Naive thymus-derived CD4-positive, alpha-beta T cell (primary cell): ENCODE measurements at regions of chr5 and their contacts with region 1.

Region 1: DNA sequence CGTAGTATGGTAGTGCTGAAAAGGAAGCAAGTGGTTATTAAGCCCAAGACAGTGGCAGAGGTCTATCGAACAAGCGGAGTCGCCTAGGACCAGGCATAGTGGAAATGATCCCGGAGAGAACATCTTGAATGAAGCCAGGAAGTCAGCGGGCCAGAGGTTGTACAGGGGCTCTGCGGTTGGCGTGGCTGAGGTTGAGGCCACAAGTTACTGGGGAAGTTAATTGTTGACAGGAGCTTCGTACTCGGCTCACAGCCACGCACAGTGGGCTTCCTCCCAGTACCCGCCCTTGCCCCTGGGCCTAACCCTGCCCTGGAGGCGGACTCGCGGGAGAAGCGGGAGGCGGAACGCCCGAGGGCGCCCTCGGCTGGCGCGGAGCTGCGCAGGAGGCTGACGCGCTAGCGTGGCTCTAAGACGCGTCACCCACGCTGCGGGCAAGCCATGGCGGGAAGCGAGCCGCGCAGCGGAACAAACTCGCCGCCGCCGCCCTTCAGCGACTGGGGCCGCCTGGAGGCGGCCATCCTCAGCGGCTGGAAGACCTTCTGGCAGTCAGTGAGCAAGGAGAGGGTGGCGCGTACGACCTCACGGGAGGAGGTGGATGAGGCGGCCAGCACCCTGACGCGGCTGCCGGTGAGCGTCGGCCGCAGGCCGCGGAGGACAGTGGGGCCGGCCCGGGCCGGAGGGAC is at the start of gene FBXO4:
- DNase-seq: peak; percentile 79 to 92 (median 88)
- ATAC-seq: peak; percentile 97
- H3K4me3 ChIP-seq: peak within 1 kb of the TSS; percentile 85
- H3K4me3 Mint-ChIP-seq: peak within 1 kb of the TSS; percentile 83 to 93 (median 88)
- H3K27ac ChIP-seq: peak within 1 kb of the TSS; percentile 96
- H3K27ac Mint-ChIP-seq: peak within 1 kb of the TSS; percentile 93 to 100 (median 97)
- H3K4me1 ChIP-seq: peaks cover 6 to 14% of the 10 kb centered on the region in 2 donors
- H3K4me1 Mint-ChIP-seq: peaks cover 9 to 43% (median 25%) of the 10 kb centered on the region in 7 donors
- H3K27me3 ChIP-seq: no peaks in the 10 kb centered on the region
- H3K27me3 Mint-ChIP-seq: no peaks in the 10 kb centered on the region
- total RNA-seq, gene FBXO4: 10.9 to 15.0 (median 14.6) TPM

Region 2: GRCh38 chr5:40798012-40798855 is 1126.8 kb before region 1 on chr5 and contains the start of gene PRKAA1:
- CTCF ChIA-PET with region 1: no interaction called
- POLR2A ChIA-PET with region 1: interaction called, 3 read pairs
- intact Hi-C with region 1: loop called in 1 of 2 experiments (anchors 1 kb)
- DNase-seq: peak; percentile 86 to 92 (median 91)
- ATAC-seq: peak; percentile 98
- H3K4me3 ChIP-seq: peak within 1 kb of the TSS; percentile 98
- H3K4me3 Mint-ChIP-seq: peak within 1 kb of the TSS; percentile 86 to 96 (median 94)
- H3K27ac ChIP-seq: peak within 1 kb of the TSS; percentile 91
- H3K27ac Mint-ChIP-seq: peak within 1 kb of the TSS; percentile 74 to 96 (median 94)
- H3K4me1 ChIP-seq: peaks cover 12 to 16% of the 10 kb centered on the region in 2 donors
- H3K4me1 Mint-ChIP-seq: peaks cover 28 to 55% (median 44%) of the 10 kb centered on the region in 7 donors
- H3K27me3 ChIP-seq: no peaks in the 10 kb centered on the region
- H3K27me3 Mint-ChIP-seq: peaks cover 0 to 17% (median 0%) of the 10 kb centered on the region in 5 donors
- total RNA-seq, gene PRKAA1: 65.5 to 103 (median 98.1) TPM

Region 3: GRCh38 chr5:41869739-41870626 is 55.0 kb before region 1 on chr5 and contains the start of gene OXCT1:
- CTCF ChIA-PET with region 1: interaction called, 4 read pairs
- POLR2A ChIA-PET with region 1: interaction called, 30 read pairs
- intact Hi-C with region 1: loop called (anchors 1 kb)
- DNase-seq: peak; percentile 88 to 96 (median 95)
- ATAC-seq: peak; percentile 97
- H3K4me3 ChIP-seq: peak within 1 kb of the TSS; percentile 91
- H3K4me3 Mint-ChIP-seq: peak within 1 kb of the TSS; percentile 85 to 94 (median 90)
- H3K27ac ChIP-seq: peak within 1 kb of the TSS; percentile 97
- H3K27ac Mint-ChIP-seq: peak within 1 kb of the TSS; percentile 89 to 98 (median 97)
- H3K4me1 ChIP-seq: peaks cover 16% of the 10 kb centered on the region in 2 donors
- H3K4me1 Mint-ChIP-seq: peaks cover 18 to 63% (median 57%) of the 10 kb centered on the region in 7 donors
- H3K27me3 ChIP-seq: no peaks in the 10 kb centered on the region
- H3K27me3 Mint-ChIP-seq: no peaks in the 10 kb centered on the region
- total RNA-seq, gene OXCT1: 18.6 to 53.1 (median 30.0) TPM

Region 4: GRCh38 chr5:42756606-42757601 is 831.9 kb after region 1 on chr5 and contains the start of gene CCDC152:
- CTCF ChIA-PET with region 1: no interaction called
- POLR2A ChIA-PET with region 1: no interaction called
- intact Hi-C with region 1: loop called in 1 of 2 experiments (anchors 10 kb)
- DNase-seq: peak; percentile 11 to 55 (median 41)
- ATAC-seq: peak; percentile 94
- H3K4me3 ChIP-seq: peak within 1 kb of the TSS; percentile 49
- H3K4me3 Mint-ChIP-seq: peak within 1 kb of the TSS; percentile 71 to 92 (median 86)
- H3K27ac ChIP-seq: peak within 1 kb of the TSS; percentile 36
- H3K27ac Mint-ChIP-seq: peak within 1 kb of the TSS; percentile 14 to 81 (median 34)
- H3K4me1 ChIP-seq: no peaks in the 10 kb centered on the region
- H3K4me1 Mint-ChIP-seq: peaks cover 9 to 17% (median 11%) of the 10 kb centered on the region in 7 donors
- H3K27me3 ChIP-seq: no peaks in the 10 kb centered on the region
- H3K27me3 Mint-ChIP-seq: peaks cover 7 to 21% (median 10%) of the 10 kb centered on the region in 5 donors
- total RNA-seq, gene CCDC152: 1.7 to 6.1 (median 3.4) TPM

Region 5: DNA sequence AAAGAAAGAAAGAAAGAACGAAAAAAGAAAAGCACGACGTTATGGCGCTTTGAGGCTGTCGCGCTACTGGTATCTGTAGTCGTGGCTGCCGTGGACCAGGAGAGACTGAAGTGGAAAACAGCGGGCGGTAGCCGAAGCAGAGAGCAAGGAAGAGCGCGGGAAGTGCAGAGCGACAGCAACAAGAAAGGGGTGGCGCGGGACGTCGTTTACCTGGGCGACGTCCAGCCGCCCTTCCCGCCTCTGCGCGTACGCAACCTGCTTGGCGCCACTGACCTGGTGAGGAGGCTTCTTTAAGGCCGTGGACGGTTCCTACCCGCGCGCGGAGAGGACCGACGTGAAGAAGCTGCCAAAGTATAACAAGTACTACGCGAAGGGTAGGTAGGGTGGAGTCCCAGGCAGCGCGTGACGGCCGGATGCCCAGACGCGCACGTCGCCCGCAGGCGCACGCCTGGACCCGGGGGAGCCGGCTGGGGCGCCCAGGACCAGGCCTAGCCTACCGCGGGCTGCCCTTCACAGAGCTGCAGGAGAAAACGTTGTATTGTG is 1471.8 kb after region 1 on chr5:
- CTCF ChIA-PET with region 1: no interaction called
- POLR2A ChIA-PET with region 1: no interaction called
- intact Hi-C with region 1: loop called in 1 of 2 experiments (anchors 5 kb)
- DNase-seq: peak; percentile 42 to 74 (median 66)
- ATAC-seq: peak; percentile 96
- H3K4me3 ChIP-seq: peak overlapping the region; percentile 80
- H3K4me3 Mint-ChIP-seq: peak overlapping the region; percentile 88 to 100 (median 98)
- H3K27ac ChIP-seq: peak overlapping the region; percentile 76
- H3K27ac Mint-ChIP-seq: peak overlapping the region; percentile 93 to 99 (median 97)
- H3K4me1 ChIP-seq: peaks cover 3 to 7% of the 10 kb centered on the region in 2 donors
- H3K4me1 Mint-ChIP-seq: peaks cover 15 to 62% (median 41%) of the 10 kb centered on the region in 7 donors
- H3K27me3 ChIP-seq: no peaks in the 10 kb centered on the region
- H3K27me3 Mint-ChIP-seq: no peaks in the 10 kb centered on the region